ENCODE measurements at regions of chr12 and their contacts with region 1.

Region 1: GRCh38 chr12:28998637-28999120 is 150.4 kb upstream of the FAR2 start:
- DNase-seq: no peak
- ATAC-seq: peak in 3 of 8 donors; percentile 33 to 55 (median 37)
- H3K4me3 ChIP-seq: no peak overlapping the region
- H3K27ac ChIP-seq: no peak overlapping the region
- H3K4me1 ChIP-seq: peaks cover 0 to 19% (median 0%) of the 10 kb centered on the region in 9 donors
- H3K27me3 ChIP-seq: no peaks in the 10 kb centered on the region
- CTCF ChIP-seq: peak in 7 of 9 donors; percentile 38 to 72 (median 55)

Region 2: GRCh38 chr12:28899951-28900350 is 98.7 kb before region 1 on chr12:
- intact Hi-C with region 1: loop called in 1 of 10 experiments (anchors 10 kb)
- DNase-seq: no peak
- ATAC-seq: no peak
- H3K4me3 ChIP-seq: no peak overlapping the region
- H3K27ac ChIP-seq: no peak overlapping the region
- H3K4me1 ChIP-seq: no peaks in the 10 kb centered on the region
- H3K27me3 ChIP-seq: no peaks in the 10 kb centered on the region
- CTCF ChIP-seq: no peak

Region 3: DNA sequence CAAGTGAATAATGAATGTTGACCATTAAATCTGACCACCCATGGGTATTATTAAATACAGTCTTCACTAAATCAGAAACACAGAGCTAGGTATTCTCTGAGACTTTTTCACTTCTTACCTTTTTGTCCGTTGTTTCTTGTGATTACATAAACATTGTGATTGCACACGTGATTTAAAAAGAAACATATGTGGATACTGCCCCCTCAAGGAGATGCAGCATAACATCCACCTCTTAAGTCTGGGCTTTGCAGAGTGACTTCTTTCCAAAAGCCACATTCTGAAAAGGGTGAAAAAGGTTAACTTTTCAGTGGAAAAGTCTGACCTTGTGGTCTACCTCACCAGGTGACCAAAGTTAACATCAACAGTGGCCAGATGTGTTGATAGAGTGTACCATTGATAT is 35.1 kb before region 1 on chr12:
- intact Hi-C with region 1: no loop called
- DNase-seq: no peak
- ATAC-seq: no peak
- H3K4me3 ChIP-seq: no peak overlapping the region
- H3K27ac ChIP-seq: no peak overlapping the region
- H3K4me1 ChIP-seq: peaks cover 0 to 56% (median 30%) of the 10 kb centered on the region in 9 donors
- H3K27me3 ChIP-seq: no peaks in the 10 kb centered on the region
- CTCF ChIP-seq: peak in 7 of 9 donors; percentile 5 to 53 (median 32)

Region 4: GRCh38 chr12:30155001-30155730 is 1156.5 kb after region 1 on chr12:
- intact Hi-C with region 1: no loop called
- DNase-seq: no peak
- ATAC-seq: no peak
- H3K4me3 ChIP-seq: no peak overlapping the region
- H3K27ac ChIP-seq: no peak overlapping the region
- H3K4me1 ChIP-seq: no peaks in the 10 kb centered on the region
- H3K27me3 ChIP-seq: no peaks in the 10 kb centered on the region
- CTCF ChIP-seq: no peak

Measured in heart right ventricle (tissue), 16 donors.